ENCODE measurements at regions of chr17 and their contacts with region 1.

Region 1: DNA sequence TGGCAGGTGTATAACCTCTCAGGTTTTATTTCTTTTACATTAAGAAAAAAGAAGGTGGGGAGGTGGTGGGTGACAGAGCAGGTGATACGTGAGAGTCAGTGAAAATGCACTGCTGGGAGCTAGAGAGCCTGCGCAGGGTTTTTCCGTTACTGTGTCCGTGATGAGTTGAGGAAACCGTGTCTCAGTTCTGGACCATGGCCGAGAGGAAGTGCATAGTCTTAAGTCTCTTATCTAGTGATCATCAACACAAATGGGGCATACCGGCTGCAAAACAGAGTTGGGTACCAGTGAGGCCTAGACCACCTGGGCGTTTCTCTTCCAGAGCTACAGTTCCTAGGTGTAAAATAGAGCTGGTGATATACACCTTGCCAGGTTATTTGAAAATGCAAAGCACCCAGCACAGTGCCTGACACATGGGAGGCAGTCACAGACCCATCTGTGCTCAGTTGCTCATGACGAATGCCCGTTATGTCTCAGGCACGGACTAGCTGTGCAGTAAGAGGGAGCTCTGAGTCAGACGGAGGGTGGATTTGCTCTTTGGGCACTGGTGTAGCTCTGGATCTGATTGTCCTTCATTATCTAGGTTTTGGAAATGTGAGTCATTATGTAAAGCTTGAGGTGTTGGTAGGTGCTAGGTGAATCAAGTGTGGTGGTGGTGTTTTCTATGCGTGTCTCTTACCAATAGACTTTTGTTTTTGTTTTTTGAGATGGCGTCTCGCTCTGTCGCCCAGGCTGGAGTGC is 60.9 kb downstream of the RPTOR start:
- DNase-seq: peak; percentile 89
- ATAC-seq: peak; percentile 100
- H3K4me3 Mint-ChIP-seq: peak overlapping the region; percentile 37
- H3K27ac Mint-ChIP-seq: peak overlapping the region; percentile 92
- H3K4me1 Mint-ChIP-seq: peaks cover 75% of the 10 kb centered on the region
- H3K27me3 Mint-ChIP-seq: no peaks in the 10 kb centered on the region

Region 2: GRCh38 chr17:80591788-80592187 is 13.7 kb before region 1 on chr17:
- CTCF ChIA-PET with region 1: no interaction called
- POLR2A ChIA-PET with region 1: interaction called, 3 read pairs
- intact Hi-C with region 1: loop called in 1 of 2 experiments (anchors 2 kb)
- DNase-seq: no peak
- ATAC-seq: peak; percentile 56
- H3K4me3 Mint-ChIP-seq: no peak overlapping the region
- H3K27ac Mint-ChIP-seq: peak overlapping the region; percentile 28
- H3K4me1 Mint-ChIP-seq: peaks cover 68% of the 10 kb centered on the region
- H3K27me3 Mint-ChIP-seq: no peaks in the 10 kb centered on the region

Region 3: DNA sequence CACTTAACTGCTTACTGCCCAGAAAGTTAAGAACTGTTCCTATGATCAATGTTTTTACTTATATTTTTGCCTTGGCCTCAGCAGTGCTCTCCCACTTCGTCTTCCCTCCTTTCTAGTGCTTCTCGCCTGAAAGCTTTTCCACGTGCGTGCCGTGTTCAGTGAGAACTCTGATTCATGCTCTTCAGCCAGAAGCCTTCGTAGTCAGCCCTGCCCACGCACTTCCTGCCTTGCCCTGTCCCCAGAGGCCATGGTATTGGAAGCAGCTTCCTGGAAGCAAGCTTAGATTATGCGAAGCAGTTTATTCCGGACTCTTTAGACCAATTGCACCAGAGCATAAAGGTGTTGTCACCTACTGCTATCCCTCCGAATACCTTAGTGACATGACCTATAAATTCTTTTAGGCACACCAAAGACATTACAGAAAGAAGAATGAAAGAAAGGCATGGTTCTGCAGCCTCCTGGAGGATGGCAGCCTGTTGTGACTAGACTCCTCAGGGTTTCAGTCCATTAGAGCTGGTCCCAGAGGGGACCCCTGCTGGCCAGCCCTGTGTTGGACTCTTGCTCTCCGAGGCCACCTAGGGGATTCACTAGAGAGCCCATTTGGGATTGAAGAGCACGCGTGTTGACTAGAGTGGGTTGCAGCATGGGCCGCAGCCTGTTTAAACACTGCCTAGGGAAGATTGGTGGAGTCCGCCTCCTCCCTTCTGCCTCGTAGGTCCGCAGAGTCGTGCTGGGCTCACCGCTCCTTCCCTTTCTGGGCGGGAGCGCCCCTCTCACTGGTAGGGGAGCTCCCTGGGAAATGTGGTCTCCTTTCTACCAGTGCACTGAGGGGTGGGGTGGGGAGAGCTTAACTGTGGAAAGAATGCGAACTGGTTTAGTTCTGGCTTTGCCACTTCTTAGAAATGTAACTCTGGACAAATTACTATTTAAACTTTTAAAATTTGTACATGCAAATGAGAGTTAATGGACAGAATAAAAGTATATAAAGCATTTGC is 44.5 kb after region 1 on chr17:
- CTCF ChIA-PET with region 1: no interaction called
- POLR2A ChIA-PET with region 1: no interaction called
- intact Hi-C with region 1: loop called (anchors 2 to 5 kb)
- DNase-seq: peak; percentile 92
- ATAC-seq: peak; percentile 85
- H3K4me3 Mint-ChIP-seq: peak overlapping the region; percentile 17
- H3K27ac Mint-ChIP-seq: peak overlapping the region; percentile 92
- H3K4me1 Mint-ChIP-seq: peaks cover 69% of the 10 kb centered on the region
- H3K27me3 Mint-ChIP-seq: no peaks in the 10 kb centered on the region

Region 4: DNA sequence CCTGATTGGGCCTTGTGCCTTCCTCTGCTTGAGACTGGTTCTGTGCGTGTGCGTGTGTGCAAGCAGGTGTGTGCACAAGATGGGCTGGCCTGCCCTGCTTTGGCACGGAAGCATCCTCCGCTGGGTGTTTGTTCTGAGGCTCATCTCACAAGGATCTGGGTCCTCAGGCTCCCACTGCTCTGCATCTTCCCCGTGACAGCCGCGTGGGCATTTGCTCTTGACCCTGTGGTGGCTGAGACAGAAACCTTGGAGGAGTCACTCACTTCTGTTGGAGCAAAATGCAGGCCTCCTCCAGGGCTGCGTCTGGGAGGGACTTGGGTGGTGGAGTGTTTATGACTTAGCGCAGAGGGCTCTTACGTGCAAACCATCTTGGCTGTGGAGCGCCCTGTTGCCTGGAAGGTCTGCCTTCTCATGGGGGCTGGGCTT is 58.3 kb after region 1 on chr17:
- CTCF ChIA-PET with region 1: no interaction called
- POLR2A ChIA-PET with region 1: no interaction called
- intact Hi-C with region 1: loop called in 1 of 2 experiments (anchors 5 kb)
- DNase-seq: peak; percentile 76
- ATAC-seq: peak; percentile 83
- H3K4me3 Mint-ChIP-seq: peak overlapping the region; percentile 61
- H3K27ac Mint-ChIP-seq: peak overlapping the region; percentile 96
- H3K4me1 Mint-ChIP-seq: peaks cover 77% of the 10 kb centered on the region
- H3K27me3 Mint-ChIP-seq: no peaks in the 10 kb centered on the region

Region 5: DNA sequence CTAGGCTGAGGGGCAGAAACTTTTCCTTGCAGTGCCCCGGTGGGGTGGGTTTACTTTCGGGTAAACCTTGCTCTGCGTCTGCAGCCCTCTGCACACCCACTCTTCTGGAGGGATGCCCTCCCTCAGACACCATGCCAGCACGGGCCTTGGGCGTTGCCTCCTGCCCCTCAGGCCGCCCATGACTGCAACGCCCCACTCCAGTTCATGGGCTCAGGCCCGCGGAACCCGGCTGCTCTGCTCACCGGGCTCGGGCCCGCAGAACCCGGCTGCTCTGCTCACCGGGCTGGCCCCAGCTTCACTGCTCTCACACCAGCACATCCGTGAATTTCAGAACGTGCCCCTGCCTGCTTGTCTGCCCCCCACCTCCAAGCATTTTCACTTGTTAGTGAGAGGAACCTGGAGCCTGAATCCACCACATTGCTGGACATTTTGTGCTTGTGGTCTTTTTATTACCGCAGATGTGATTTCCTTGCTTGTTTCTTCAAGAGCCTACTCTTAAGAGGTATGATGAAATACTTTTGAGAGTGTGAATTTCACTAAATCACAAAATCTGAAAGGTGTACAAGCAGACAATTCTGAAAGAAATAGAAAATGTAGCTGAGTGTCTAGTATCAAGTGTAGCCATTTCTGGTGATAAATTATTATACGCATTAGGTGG is 70.1 kb after region 1 on chr17:
- CTCF ChIA-PET with region 1: interaction called, 9 read pairs
- POLR2A ChIA-PET with region 1: no interaction called
- intact Hi-C with region 1: loop called in 1 of 2 experiments (anchors 2 kb)
- DNase-seq: no peak
- ATAC-seq: no peak
- H3K4me3 Mint-ChIP-seq: no peak overlapping the region
- H3K27ac Mint-ChIP-seq: peak overlapping the region; percentile 79
- H3K4me1 Mint-ChIP-seq: peaks cover 74% of the 10 kb centered on the region
- H3K27me3 Mint-ChIP-seq: no peaks in the 10 kb centered on the region

Region 6: DNA sequence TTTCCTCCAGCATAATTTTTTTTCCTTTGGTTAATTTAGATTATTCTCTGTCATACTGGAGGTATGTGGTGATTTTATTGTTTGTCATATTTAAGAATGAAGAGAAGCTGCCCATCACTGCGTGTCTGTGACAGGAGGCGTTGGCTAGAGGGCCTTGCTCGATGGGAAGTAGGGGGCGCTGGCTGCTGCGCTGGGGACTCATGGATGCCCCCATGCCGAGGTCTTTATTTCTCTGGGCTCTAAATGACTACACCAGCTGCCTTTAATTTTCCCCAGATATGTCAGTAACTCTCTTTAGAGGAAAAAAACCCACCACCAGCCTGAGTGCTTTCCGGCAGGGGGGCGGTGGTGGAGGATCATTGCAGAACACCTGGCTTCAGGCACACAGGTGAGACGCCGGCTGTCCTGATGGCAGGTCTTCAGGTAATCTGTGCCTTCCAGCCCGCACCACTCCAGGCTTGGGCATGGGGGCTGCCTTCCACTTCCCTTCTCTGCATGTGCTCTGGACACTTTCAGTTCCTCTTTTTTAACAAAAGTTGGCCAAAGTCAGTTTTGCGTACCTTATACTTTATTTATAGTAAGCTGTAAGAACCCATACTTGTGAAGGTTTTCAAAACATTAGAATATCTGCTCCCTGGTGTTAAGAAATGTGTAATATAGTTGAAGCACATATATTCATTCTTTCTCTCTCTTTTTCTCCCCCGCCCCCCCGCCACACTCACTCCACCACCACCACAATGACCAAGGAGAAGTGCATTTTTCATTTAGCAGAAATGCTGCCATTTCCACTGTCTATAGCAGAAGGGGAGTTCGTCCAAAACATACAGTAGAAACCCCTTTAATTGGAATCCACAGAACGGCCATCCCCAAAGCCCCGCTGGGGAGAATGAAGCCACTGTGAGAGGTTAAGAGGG is 131.9 kb after region 1 on chr17:
- CTCF ChIA-PET with region 1: no interaction called
- POLR2A ChIA-PET with region 1: no interaction called
- intact Hi-C with region 1: no loop called
- DNase-seq: no peak
- ATAC-seq: no peak
- H3K4me3 Mint-ChIP-seq: no peak overlapping the region
- H3K27ac Mint-ChIP-seq: no peak overlapping the region
- H3K4me1 Mint-ChIP-seq: peaks cover 44% of the 10 kb centered on the region
- H3K27me3 Mint-ChIP-seq: no peaks in the 10 kb centered on the region

Region 7: GRCh38 chr17:80755650-80756405 is 150.3 kb after region 1 on chr17:
- CTCF ChIA-PET with region 1: no interaction called
- POLR2A ChIA-PET with region 1: no interaction called
- intact Hi-C with region 1: loop called in 1 of 2 experiments (anchors 5 kb)
- DNase-seq: no peak
- ATAC-seq: no peak
- H3K4me3 Mint-ChIP-seq: no peak overlapping the region
- H3K27ac Mint-ChIP-seq: peak overlapping the region; percentile 32
- H3K4me1 Mint-ChIP-seq: peaks cover 70% of the 10 kb centered on the region
- H3K27me3 Mint-ChIP-seq: no peaks in the 10 kb centered on the region

Region 8: GRCh38 chr17:80832888-80833583 is 227.5 kb after region 1 on chr17:
- CTCF ChIA-PET with region 1: no interaction called
- POLR2A ChIA-PET with region 1: interaction called, 3 read pairs
- intact Hi-C with region 1: loop called in 1 of 2 experiments (anchors 1 kb)
- DNase-seq: peak; percentile 92
- ATAC-seq: peak; percentile 90
- H3K4me3 Mint-ChIP-seq: peak overlapping the region; percentile 70
- H3K27ac Mint-ChIP-seq: peak overlapping the region; percentile 95
- H3K4me1 Mint-ChIP-seq: peaks cover 44% of the 10 kb centered on the region
- H3K27me3 Mint-ChIP-seq: no peaks in the 10 kb centered on the region

Measured in activated CD4-positive, alpha-beta T cell treated with anti-CD3 and anti-CD28 coated beads for 36 hours (primary cell).